Colonic mucosa (tissue), 4 donors: ENCODE measurements at regions of chr6 and their contacts with region 1.

Region 1: DNA sequence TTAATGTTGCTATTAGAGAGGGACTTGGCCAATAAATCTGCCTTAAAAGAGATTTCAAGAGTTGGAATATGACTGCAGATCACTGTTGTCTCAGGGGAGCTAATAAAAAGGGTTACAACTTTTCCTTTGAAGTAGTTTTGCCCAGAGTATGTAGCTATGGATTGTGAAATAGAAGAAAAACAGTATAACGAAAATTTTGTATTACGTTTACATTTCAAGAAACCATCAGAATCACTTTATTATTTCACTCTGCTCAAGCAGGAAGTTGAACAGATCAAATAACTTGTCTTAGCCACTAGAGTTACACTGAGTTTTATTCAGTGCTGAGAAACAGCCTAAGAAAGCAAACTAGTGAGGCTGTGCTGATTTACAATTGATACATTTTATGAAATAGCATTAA is 3.0 kb upstream of the ZSCAN26 start:
- DNase-seq: no peak
- H3K4me3 ChIP-seq: no peak overlapping the region
- H3K27ac ChIP-seq: no peak overlapping the region
- H3K4me1 ChIP-seq: no peaks in the 10 kb centered on the region
- H3K27me3 ChIP-seq: no peaks in the 10 kb centered on the region
- CTCF ChIP-seq: no peak

Region 2: GRCh38 chr6:28053584-28053983 is 210.4 kb before region 1 on chr6:
- intact Hi-C with region 1: no loop called
- DNase-seq: no peak
- H3K4me3 ChIP-seq: no peak overlapping the region
- H3K27ac ChIP-seq: no peak overlapping the region
- H3K4me1 ChIP-seq: no peaks in the 10 kb centered on the region
- H3K27me3 ChIP-seq: no peaks in the 10 kb centered on the region
- CTCF ChIP-seq: no peak

Region 3: GRCh38 chr6:28334286-28335039 is 70.5 kb after region 1 on chr6:
- intact Hi-C with region 1: loop called (anchors 5 kb)
- DNase-seq: no peak
- H3K4me3 ChIP-seq: no peak overlapping the region
- H3K27ac ChIP-seq: peak overlapping the region; percentile 97
- H3K4me1 ChIP-seq: no peaks in the 10 kb centered on the region
- H3K27me3 ChIP-seq: no peaks in the 10 kb centered on the region
- CTCF ChIP-seq: no peak

Region 4: GRCh38 chr6:28347119-28347518 is 83.2 kb after region 1 on chr6:
- intact Hi-C with region 1: no loop called
- DNase-seq: no peak
- H3K4me3 ChIP-seq: no peak overlapping the region
- H3K27ac ChIP-seq: no peak overlapping the region
- H3K4me1 ChIP-seq: peaks cover 4% of the 10 kb centered on the region
- H3K27me3 ChIP-seq: no peaks in the 10 kb centered on the region
- CTCF ChIP-seq: no peak

Region 5: DNA sequence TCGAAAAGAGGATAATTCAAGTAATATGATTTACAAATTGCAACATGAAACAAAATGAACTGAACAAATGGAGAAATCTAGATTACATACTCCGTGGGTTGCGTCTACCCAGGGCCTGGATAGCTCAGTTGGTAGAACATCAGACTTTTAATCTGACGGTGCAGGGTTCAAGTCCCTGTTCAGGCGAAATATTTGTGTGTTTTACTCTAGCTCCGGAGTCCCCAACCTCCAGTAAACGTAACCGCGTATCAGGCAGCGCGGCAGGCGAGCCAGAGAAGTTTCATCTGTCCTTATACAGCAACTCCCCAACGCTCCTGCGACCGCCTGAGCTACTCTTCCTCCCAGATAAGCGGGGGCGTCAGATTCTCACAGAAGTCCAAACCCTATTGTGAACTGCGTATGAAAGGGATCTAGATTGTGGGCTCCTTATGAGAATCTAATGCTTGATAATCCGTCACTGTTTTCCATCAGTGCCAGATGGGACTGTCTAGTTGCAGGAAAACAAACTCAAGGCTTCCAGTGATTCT is 483.7 kb after region 1 on chr6:
- intact Hi-C with region 1: no loop called
- DNase-seq: no peak
- H3K4me3 ChIP-seq: no peak overlapping the region
- H3K27ac ChIP-seq: no peak overlapping the region
- H3K4me1 ChIP-seq: no peaks in the 10 kb centered on the region
- H3K27me3 ChIP-seq: peaks cover 7% of the 10 kb centered on the region
- CTCF ChIP-seq: no peak